ENCODE measurements at regions of chr11 and their contacts with region 1.

Region 1: DNA sequence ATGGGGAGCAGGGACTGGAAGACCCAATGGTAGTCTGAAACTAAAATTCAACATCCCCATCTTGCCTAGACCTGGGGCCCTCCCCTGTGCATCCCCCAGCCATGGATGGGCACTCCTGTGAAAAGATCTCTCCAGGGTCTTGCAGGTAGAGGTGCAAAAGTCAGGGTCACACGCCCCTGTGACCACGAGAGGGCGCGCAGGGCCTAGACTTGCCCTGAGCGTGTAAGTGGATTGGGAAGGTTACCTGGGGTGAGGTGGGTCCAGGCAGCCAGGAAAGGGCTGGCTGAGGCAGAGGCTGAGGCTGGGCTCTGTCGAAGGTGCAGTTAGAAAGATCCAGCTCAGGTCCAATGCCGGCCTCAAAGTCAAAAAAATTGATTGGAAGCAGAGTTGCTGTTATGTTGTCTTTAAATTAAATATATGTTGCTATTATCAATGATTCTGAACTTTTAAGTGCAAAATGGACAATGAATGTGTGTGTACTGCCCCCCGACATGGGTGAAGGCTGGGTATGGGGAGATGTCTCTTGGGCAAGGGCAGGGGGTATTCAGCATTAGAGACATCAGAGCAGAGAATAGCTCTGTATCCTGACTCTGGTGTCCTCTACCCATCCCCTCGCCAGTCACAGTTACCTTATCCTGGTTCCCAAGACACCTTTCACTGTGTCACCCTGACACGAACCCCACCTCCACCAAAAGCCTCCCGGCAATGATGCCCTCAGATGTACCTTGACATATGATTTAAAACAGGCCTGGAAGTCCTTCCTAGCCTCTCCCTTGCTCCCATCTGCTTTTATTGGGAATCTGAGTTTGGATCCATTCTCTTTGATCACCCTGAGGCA is 4.7 kb upstream of the POU2F3 start:
- DNase-seq: peak; percentile 65 to 84
- ATAC-seq: no peak
- H3K4me3 ChIP-seq: no peak overlapping the region
- H3K27ac ChIP-seq: no peak overlapping the region
- H3K4me1 ChIP-seq: no peaks in the 10 kb centered on the region
- H3K27me3 ChIP-seq: no peaks in the 10 kb centered on the region

Region 2: GRCh38 chr11:120303004-120303637 is 67.9 kb after region 1 on chr11:
- intact Hi-C with region 1: loop called (anchors 1 to 2 kb)
- DNase-seq: peak in 1 of 2 donors; percentile 58
- ATAC-seq: peak; percentile 63
- H3K4me3 ChIP-seq: no peak overlapping the region
- H3K27ac ChIP-seq: no peak overlapping the region
- H3K4me1 ChIP-seq: no peaks in the 10 kb centered on the region
- H3K27me3 ChIP-seq: no peaks in the 10 kb centered on the region